Sciatic nerve (tissue), 2 donors: ENCODE measurements at regions of chr4 and their contacts with region 1.

Region 1: DNA sequence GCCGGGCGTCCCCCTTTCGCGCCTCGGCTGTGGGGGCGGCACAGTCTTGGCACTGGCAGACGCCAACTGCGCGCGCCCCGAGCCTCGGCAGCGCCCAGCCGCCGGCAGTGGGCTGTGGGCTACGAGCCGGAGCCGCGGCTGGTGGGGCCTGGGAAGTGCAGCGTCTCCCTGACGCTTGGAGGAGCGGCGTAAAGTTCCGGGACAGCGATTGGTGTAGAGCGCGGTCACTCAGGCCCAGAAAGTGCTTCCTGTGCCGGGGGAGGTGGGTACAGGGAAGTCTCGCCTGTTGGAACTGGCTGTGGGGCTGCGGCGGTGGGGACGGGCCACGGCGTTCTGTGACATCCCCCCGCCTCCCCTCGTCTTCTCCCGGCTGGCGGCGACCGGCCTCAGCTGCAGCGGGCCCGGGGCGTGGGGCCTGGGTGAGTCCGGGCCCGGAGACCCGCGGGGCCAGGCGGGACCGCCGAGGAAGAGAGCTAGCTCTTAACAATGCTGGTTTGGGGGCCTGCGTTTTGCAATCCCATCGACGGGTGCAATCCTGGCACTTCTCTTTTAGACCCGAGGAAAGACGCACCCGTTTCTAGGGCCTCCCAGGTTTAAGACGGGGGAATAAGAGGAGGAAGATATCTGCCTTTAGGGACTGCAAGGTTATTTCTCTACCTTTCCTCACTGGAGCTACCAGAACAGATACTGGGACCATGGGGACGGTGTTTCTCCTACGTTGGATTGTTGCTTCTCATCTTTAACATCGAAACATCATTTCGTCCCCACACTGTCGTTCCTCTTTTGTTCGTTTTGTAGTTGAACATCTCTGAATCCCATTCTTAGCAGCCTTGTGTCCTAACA is at the starts of genes RWDD4 and TRAPPC11:
- DNase-seq: peak; percentile 99
- ATAC-seq: peak; percentile 100
- total RNA-seq, gene RWDD4: 16.0 TPM
- total RNA-seq, gene TRAPPC11: 41.8 TPM

Region 2: GRCh38 chr4:183297675-183298074 is 361.6 kb before region 1 on chr4:
- intact Hi-C with region 1: no loop called
- DNase-seq: no peak
- ATAC-seq: no peak

Region 3: DNA sequence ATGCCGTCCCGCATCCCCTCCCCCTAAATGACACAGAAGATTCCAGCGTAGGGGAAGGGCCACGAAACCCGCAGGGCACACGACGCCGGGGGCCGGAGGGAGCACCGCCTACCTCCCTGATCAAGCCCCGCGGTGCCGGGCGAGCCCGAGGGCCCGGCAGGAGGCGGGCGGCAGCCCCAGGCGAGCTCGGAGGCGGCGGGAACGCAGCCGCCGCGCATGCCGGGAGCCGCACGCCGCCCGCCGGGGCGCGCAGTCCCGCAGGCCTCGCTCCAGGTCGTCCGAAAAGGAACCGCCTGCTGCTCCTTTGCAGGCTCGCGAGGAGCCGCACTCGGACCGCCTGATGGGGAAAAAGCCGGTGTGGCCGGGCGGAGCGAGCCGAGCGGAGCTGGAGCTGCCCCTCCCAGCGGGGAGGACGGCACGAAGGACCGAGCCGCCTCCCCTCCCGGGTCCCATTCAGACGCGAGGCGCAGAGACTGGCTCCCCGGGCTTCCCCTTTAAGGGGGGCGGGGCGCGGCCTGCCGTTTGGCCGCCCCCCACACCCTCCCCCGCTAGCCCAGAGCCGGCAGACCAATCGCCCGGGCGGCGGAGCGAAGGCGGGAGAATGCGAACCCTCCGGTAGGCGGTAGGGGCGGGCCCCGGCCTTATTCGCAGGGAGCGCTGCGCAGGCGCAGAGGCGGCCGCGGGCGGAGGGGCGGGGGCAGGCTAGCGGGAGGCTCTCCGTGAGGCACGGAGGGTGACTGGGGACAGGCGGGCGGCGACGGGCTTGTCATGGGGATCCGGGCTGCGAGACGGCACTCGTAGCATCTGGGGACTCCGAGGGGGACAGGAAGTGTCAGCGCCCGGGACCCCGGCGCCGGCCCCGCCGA is 155.0 kb before region 1 on chr4:
- intact Hi-C with region 1: loop called (anchors 10 kb)
- DNase-seq: peak; percentile 99
- ATAC-seq: peak; percentile 97

Region 4: GRCh38 chr4:183645326-183645725 is 13.9 kb before region 1 on chr4:
- intact Hi-C with region 1: no loop called
- DNase-seq: no peak
- ATAC-seq: no peak

Region 5: DNA sequence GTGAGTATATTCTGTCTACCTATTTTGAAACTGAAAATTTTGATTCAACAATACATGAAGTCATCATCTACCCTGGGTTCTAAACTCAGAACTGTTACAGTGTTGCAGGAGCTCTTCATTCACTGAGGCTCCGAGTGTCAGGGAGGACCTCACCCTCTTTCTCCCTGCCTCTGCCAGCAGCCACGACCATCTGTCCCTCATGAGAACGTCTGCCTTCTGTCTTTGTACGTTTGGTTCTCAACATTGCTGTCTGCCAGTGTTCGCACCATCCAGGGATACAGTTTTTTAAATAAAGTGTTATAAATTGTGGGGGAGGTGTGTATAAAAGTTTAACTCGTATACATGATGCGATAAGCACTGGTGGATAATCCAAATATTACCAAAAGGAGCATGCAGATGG is 55.4 kb after region 1 on chr4:
- intact Hi-C with region 1: loop called (anchors 1 kb)
- DNase-seq: no peak
- ATAC-seq: no peak

Region 6: DNA sequence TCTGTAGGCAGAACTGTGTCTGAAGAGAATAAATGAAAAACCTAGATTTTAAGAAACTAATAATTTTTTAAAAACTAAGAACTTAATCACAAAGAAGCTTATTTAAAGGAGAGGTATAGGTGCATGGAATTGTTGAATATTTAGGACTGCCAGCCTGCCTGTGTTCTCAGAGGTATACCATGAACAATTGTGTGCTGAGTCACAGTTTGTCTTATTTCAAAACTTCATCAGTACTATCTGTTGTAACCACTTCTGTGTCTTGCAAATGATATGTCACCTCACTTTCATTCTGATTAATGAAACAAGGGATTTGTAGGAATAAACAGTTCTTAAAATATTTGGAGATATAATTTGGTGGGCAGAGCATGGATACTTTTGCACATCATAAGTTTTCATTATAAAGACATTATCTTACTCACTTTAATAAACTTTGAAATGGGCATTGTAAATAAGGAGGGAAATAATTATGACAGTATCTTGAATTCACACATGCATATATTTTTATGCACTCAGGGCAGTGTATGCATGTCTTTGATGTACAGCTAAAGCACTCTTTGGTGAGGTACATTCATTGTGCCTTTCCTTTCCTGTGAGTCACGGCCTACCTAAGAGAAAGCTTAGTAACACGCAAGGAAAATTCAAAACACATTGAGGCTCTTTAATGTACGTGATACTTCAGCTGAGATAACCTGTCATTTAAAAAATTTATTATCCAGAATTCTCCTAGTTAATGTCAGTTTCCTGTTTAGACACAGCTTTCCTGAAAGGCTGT is 277.5 kb after region 1 on chr4:
- intact Hi-C with region 1: no loop called
- DNase-seq: no peak
- ATAC-seq: no peak